ENCODE measurements at regions of chr19 and their contacts with region 1.

Region 1: GRCh38 chr19:50368649-50369570 is 3.5 kb upstream of the NAPSA start:
- DNase-seq: peak; percentile 78 to 89 (median 87)
- H3K4me3 ChIP-seq: peak overlapping the region; percentile 46
- H3K27ac ChIP-seq: peak overlapping the region in 1 of 2 donors; percentile 44
- H3K4me1 ChIP-seq: no peaks in the 10 kb centered on the region
- H3K27me3 ChIP-seq: no peaks in the 10 kb centered on the region
- CTCF ChIP-seq: peak; percentile 72 to 87 (median 74)
- EP300 ChIP-seq: no peak
- POLR2A ChIP-seq: no peak

Region 2: DNA sequence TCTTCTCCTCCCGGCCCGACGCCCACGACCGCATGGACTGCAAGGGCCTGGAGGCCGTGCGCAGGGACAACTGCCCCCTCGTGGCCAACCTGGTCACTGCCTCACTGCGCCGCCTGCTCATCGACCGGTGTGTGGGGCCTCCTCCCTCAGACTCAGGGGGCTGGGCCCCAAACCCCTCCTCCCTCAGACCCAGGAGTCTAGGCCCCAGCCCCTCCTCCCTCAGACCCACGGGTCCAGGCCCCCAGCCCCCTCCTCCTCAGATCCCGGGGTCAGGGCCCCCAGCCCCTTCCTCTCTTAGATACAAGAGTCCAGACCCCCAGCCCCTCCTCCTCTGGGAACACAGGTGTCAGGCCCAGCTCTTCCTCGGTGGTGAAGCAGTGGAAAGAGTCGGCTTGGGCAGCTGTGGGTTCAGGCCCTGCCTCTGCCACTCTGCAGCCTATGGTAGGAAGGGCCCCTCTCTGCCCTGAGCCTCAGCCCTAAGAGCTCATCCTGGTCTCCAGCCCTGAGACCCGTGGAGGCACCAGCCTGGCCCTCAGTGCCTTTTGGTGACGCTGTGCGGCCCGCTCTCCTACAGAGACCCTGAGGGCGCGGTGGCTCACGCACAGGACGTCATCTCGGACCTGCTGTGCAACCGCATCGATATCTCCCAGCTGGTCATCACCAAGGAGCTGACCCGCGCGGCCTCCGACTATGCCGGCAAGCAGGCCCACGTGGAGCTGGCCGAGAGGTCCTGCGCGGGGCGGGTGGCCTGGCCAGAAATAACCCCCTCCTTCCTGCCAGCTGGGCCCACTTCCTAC is 46.2 kb after region 1 on chr19:
- intact Hi-C with region 1: loop called in 2 of 4 experiments (anchors 2 to 10 kb)
- DNase-seq: peak; percentile 60 to 85 (median 77)
- H3K4me3 ChIP-seq: no peak overlapping the region
- H3K27ac ChIP-seq: no peak overlapping the region
- H3K4me1 ChIP-seq: peaks cover 2% of the 10 kb centered on the region
- H3K27me3 ChIP-seq: no peaks in the 10 kb centered on the region
- CTCF ChIP-seq: peak; percentile 70 to 78 (median 78)
- EP300 ChIP-seq: no peak
- POLR2A ChIP-seq: no peak

Region 3: GRCh38 chr19:50461066-50461875 is 92.4 kb after region 1 on chr19:
- intact Hi-C with region 1: loop called in 2 of 4 experiments (anchors 10 kb)
- DNase-seq: peak in 2 of 5 donors; percentile 49 to 66
- H3K4me3 ChIP-seq: no peak overlapping the region
- H3K27ac ChIP-seq: no peak overlapping the region
- H3K4me1 ChIP-seq: no peaks in the 10 kb centered on the region
- H3K27me3 ChIP-seq: no peaks in the 10 kb centered on the region
- CTCF ChIP-seq: peak; percentile 23 to 58 (median 25)
- EP300 ChIP-seq: no peak
- POLR2A ChIP-seq: no peak

Region 4: DNA sequence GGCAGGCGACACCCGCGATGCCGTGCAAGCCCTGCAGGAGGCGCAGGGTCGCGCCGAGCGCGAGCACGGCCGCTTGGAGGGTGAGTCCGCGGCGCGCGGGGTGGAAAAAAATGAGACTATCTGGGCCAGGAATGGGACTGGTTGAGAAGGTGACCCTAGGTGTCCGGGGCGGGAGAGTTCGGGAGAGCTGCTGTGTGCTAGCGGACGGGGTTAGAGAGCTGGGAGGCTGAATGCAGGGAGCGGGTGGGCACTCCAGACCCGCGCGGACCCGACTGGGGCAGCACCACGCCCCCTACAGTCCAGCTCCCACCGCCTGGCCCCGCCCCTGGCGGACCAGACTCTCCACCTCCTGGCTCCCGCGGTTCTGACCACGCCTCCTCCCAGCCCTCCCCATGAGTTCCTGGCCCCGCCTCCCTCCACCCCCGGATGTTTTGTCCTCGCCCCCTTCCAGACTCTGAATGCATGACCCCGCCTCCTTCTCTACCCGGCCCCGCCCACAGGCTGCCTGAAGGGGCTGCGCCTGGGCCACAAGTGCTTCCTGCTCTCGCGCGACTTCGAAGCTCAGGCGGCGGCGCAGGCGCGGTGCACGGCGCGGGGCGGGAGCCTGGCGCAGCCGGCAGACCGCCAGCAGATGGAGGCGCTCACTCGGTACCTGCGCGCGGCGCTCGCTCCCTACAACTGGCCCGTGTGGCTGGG is 355.8 kb after region 1 on chr19:
- intact Hi-C with region 1: loop called in 1 of 4 experiments (anchors 10 kb)
- DNase-seq: peak; percentile 100
- H3K4me3 ChIP-seq: peak overlapping the region; percentile 91
- H3K27ac ChIP-seq: peak overlapping the region in 1 of 2 donors; percentile 68
- H3K4me1 ChIP-seq: peaks cover 24% of the 10 kb centered on the region
- H3K27me3 ChIP-seq: no peaks in the 10 kb centered on the region
- CTCF ChIP-seq: peak; percentile 91 to 94 (median 94)
- EP300 ChIP-seq: no peak
- POLR2A ChIP-seq: peak; percentile 74

Measured in ovary (tissue), 10 donors.